ENCODE measurements at regions of chr11 and their contacts with region 1.

Region 1: GRCh38 chr11:61947486-61948210 is 2.5 kb upstream of the BEST1 start:
- DNase-seq: peak; percentile 81 to 88
- H3K4me3 ChIP-seq: no peak overlapping the region
- H3K4me3 Mint-ChIP-seq: no peak overlapping the region
- H3K27ac Mint-ChIP-seq: no peak overlapping the region
- H3K4me1 ChIP-seq: peaks cover 12% of the 10 kb centered on the region
- H3K4me1 Mint-ChIP-seq: no peaks in the 10 kb centered on the region
- H3K27me3 ChIP-seq: no peaks in the 10 kb centered on the region
- H3K27me3 Mint-ChIP-seq: no peaks in the 10 kb centered on the region
- CTCF ChIP-seq: peak; percentile 88 to 98

Region 2: GRCh38 chr11:61871158-61871597 is 76.5 kb before region 1 on chr11:
- CTCF ChIA-PET with region 1: interaction called, 7 read pairs
- POLR2A ChIA-PET with region 1: no interaction called
- intact Hi-C with region 1: loop called (anchors 1 kb)
- DNase-seq: peak; percentile 64 to 79
- H3K4me3 ChIP-seq: no peak overlapping the region
- H3K4me3 Mint-ChIP-seq: no peak overlapping the region
- H3K27ac Mint-ChIP-seq: no peak overlapping the region
- H3K4me1 ChIP-seq: peaks cover 12% of the 10 kb centered on the region
- H3K4me1 Mint-ChIP-seq: no peaks in the 10 kb centered on the region
- H3K27me3 ChIP-seq: no peaks in the 10 kb centered on the region
- H3K27me3 Mint-ChIP-seq: no peaks in the 10 kb centered on the region
- CTCF ChIP-seq: peak; percentile 83 to 86

Region 3: DNA sequence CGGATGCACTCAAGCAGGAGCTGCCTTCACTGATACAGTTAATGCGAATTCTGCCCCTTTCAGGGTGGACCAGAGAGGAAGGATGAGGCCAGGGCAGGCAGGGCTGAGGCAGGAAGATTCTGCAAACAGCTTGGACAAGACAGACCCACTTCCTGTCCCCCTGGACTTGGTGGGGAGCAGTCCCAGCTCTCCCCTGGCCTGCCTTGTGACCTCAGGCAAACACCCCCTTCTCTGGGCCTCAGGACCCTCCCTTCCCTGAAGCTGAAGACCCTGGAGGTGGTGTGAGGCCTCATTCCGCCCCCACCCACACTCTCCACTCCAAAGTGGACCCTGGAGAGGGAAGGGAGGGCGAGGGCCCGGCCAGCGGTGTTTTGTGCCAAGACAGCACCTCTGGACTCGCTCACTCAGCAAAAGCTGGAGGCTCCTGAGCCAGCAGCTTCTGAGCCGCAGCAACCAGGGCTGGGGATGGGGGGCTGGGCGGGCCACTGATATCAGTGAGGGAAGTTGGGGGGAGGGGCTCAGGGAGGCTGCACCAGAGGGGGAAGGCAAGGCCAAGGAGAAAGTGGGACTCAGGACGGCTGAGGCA is 38.8 kb before region 1 on chr11:
- CTCF ChIA-PET with region 1: interaction called, 12 read pairs
- POLR2A ChIA-PET with region 1: no interaction called
- intact Hi-C with region 1: no loop called
- DNase-seq: no peak
- H3K4me3 ChIP-seq: no peak overlapping the region
- H3K4me3 Mint-ChIP-seq: no peak overlapping the region
- H3K27ac Mint-ChIP-seq: no peak overlapping the region
- H3K4me1 ChIP-seq: no peaks in the 10 kb centered on the region
- H3K4me1 Mint-ChIP-seq: no peaks in the 10 kb centered on the region
- H3K27me3 ChIP-seq: no peaks in the 10 kb centered on the region
- H3K27me3 Mint-ChIP-seq: no peaks in the 10 kb centered on the region
- CTCF ChIP-seq: no peak

Region 4: DNA sequence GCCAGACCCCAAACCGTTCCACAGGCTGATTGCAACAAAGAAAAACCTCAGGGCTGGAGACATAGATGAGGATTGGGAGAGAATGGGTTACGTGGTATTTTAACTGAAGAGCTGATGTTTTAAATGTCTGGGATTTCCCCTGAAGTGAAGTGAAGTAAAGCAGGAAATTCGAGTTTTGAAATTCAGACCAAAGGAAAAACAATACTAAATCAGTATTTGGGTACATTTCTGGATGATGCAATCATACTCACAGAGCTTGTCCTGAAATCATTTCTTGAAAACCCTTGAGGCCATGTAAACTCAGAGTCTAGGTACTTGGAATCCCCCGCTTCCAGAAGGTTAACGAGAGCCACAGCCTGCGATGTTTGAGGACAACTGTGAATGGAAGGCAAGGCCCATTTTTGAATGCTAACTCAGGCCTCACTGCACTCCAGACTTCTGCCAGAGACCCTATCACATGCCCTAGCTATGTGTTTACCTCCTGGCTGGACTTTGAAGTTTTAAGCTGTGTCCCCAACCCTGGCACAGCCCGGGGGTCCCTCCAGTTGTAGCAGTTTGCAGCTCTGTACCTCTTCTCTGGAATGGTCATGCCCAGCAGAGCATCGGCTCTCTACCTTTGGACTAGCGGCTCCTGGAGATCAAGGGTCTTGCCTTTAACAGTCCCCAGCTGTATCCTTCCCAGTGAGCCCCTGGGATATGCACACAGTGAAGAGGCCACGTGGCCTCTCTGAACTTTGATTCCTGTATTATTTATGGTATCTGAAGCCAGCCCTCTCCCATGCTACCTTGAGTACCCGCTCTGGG is 25.2 kb after region 1 on chr11:
- CTCF ChIA-PET with region 1: interaction called, 10 read pairs
- POLR2A ChIA-PET with region 1: interaction called, 36 read pairs
- intact Hi-C with region 1: no loop called
- DNase-seq: peak; percentile 47 to 61
- H3K4me3 ChIP-seq: no peak overlapping the region
- H3K4me3 Mint-ChIP-seq: peak overlapping the region; percentile 56
- H3K27ac Mint-ChIP-seq: peak overlapping the region; percentile 85
- H3K4me1 ChIP-seq: peaks cover 36% of the 10 kb centered on the region
- H3K4me1 Mint-ChIP-seq: peaks cover 49% of the 10 kb centered on the region
- H3K27me3 ChIP-seq: no peaks in the 10 kb centered on the region
- H3K27me3 Mint-ChIP-seq: no peaks in the 10 kb centered on the region
- CTCF ChIP-seq: no peak

Region 5: DNA sequence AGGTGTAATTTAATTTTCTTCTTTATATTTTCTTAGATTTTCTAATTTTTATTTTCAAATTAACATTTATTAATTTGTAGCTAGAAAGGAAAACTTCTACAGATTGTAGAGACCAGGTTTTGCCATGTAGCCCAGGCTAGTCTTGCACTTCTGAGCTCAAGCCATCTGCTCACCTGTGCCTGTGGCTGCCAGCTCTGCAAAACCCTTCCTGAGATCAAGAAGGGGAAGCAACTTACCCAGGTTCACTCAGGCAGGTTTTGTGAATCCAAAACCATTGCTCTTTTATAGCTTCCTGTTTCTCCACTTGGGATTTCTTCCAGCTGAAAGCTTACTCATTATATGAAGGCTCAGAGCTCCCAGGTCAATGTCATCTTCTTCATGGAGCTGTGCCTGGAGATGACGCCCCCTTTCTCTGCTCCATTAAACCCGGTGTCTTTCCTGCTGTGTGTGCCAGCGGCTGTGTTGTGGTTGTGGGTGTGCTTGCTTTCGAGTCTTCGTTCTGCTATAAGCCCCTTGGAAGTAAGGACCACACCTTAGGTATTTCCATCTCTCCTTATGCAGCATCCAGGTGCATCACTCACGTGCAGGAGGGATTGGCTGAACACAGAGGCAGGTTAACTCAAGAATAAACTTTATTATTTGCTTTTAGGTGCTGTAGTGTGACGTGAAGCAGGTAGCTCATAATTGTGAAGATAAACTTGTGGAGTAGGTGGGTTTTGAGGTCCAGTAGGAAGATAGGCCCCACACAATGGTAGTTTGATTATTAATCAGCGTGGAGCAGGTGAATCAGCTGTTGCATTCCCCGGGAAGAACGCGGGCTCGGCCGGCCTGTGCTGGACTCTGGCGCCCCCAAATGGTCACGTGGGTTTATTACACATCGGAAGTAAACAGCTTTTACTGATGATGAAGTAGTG is 134.0 kb after region 1 on chr11:
- CTCF ChIA-PET with region 1: interaction called, 48 read pairs
- POLR2A ChIA-PET with region 1: no interaction called
- intact Hi-C with region 1: no loop called
- DNase-seq: peak; percentile 71 to 87
- H3K4me3 ChIP-seq: no peak overlapping the region
- H3K4me3 Mint-ChIP-seq: no peak overlapping the region
- H3K27ac Mint-ChIP-seq: no peak overlapping the region
- H3K4me1 ChIP-seq: no peaks in the 10 kb centered on the region
- H3K4me1 Mint-ChIP-seq: no peaks in the 10 kb centered on the region
- H3K27me3 ChIP-seq: no peaks in the 10 kb centered on the region; the same call in 1 of the 2 replicates
- H3K27me3 Mint-ChIP-seq: no peaks in the 10 kb centered on the region
- CTCF ChIP-seq: peak; percentile 89 to 91